Heart left ventricle (tissue), 16 donors: ENCODE measurements at regions of chr16 and their contacts with region 1.

Region 1: GRCh38 chr16:66717112-66717675 is 20.7 kb upstream of the CMTM4 start:
- DNase-seq: peak in 2 of 5 donors; percentile 27 to 35
- ATAC-seq: peak; percentile 38 to 82 (median 67)
- H3K4me3 ChIP-seq: no peak overlapping the region
- H3K27ac ChIP-seq: no peak overlapping the region
- H3K4me1 ChIP-seq: peaks cover 0 to 6% (median 0%) of the 10 kb centered on the region in 12 donors
- H3K27me3 ChIP-seq: no peaks in the 10 kb centered on the region
- CTCF ChIP-seq: peak; percentile 31 to 67 (median 38)
- POLR2A ChIP-seq: no peak

Region 2: DNA sequence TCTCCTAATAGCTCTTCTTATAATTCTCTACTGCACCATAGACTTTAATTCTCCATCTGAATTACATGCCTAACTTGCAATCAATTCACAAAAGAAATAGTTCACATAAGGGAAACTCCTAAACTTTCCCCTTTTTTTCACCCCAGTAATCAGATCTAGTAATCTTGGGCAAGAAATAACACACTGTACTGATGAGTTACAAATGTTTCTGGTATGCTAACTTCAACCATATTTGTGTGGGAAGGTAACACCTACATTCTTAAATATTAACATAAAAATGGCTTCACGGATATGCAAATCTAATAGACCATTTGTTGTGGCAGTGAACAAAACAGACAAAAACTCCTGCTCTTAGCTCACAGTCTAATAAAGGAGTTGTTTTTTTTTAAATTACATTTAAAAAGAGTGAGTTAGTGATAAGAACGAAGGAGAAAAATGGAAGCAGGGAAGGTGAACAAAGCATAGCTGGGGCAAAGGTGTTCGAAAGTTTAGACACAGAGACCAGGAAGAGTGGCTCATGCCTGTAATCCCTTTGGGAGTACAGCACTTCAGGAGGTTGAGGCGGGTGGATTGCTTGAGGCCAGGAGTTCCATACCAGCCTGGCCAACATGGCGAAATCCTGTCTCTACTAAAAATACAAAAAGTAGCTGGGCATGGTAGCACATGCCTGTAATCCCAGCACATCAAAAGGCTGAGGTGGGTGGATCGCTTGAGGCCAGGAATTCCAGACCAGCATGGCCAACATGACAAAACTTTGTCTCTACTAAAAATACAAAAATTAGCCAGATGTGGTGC is 77.9 kb before region 1 on chr16:
- intact Hi-C with region 1: no loop called
- DNase-seq: peak in 1 of 5 donors; percentile 4
- ATAC-seq: no peak
- H3K4me3 ChIP-seq: no peak overlapping the region
- H3K27ac ChIP-seq: no peak overlapping the region
- H3K4me1 ChIP-seq: no peaks in the 10 kb centered on the region
- H3K27me3 ChIP-seq: no peaks in the 10 kb centered on the region
- CTCF ChIP-seq: no peak
- POLR2A ChIP-seq: no peak

Region 3: GRCh38 chr16:66650707-66651473 is 66.3 kb before region 1 on chr16:
- intact Hi-C with region 1: loop called in 1 of 10 experiments (anchors 10 kb)
- DNase-seq: peak; percentile 71 to 82 (median 76)
- ATAC-seq: peak; percentile 71 to 96 (median 91)
- H3K4me3 ChIP-seq: peak overlapping the region in 6 of 12 donors; percentile 3 to 41 (median 33)
- H3K27ac ChIP-seq: no peak overlapping the region
- H3K4me1 ChIP-seq: peaks cover 0 to 36% (median 7%) of the 10 kb centered on the region in 12 donors
- H3K27me3 ChIP-seq: no peaks in the 10 kb centered on the region
- CTCF ChIP-seq: peak; percentile 82 to 97 (median 93)
- POLR2A ChIP-seq: no peak

Region 4: DNA sequence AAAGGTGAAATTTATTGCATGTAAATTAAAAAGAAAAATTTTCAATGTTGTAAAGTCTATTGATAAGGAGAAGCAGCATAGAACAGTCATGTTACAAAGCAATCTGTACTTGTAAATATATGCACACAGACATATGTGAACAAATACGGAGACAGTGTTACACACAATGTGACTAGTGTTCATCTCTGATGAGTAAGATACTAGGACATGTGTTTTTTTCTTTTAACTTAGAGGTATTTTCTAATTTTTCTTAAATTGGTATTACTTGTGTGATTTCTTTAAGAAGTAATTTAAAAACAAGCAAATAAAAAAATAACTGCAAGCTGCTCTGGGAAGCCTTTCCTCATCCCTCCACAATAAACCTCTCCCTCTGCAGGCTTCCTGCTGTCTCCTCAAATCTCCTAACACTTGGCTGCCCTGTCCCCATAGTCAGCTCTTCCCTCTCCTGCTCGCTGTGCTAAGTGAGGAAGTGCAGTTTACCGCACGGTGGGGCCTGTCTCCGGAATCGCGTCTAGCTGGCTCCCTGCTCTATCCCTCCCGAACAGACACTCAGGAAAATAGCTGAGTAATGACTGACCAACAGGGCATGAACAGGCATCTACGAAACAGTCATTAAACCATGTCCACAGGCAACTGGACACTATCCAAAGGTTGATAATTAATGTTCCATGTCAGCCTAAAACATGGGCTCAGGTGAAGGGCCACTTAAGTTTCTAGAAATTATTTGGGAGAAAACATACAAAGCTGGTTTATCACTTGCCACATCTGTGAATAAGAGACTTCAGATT is 56.6 kb before region 1 on chr16:
- intact Hi-C with region 1: loop called in 2 of 10 experiments (anchors 10 kb)
- DNase-seq: peak; percentile 71 to 82 (median 75)
- ATAC-seq: peak; percentile 93 to 97 (median 97)
- H3K4me3 ChIP-seq: no peak overlapping the region
- H3K27ac ChIP-seq: peak overlapping the region; percentile 0 to 78 (median 62)
- H3K4me1 ChIP-seq: peaks cover 3 to 32% (median 25%) of the 10 kb centered on the region in 12 donors
- H3K27me3 ChIP-seq: no peaks in the 10 kb centered on the region
- CTCF ChIP-seq: peak in 7 of 12 donors; percentile 5 to 52 (median 33)
- POLR2A ChIP-seq: no peak

Region 5: GRCh38 chr16:66728804-66729203 is 11.6 kb after region 1 on chr16:
- intact Hi-C with region 1: no loop called
- DNase-seq: no peak
- ATAC-seq: no peak
- H3K4me3 ChIP-seq: no peak overlapping the region
- H3K27ac ChIP-seq: no peak overlapping the region
- H3K4me1 ChIP-seq: peaks cover 0 to 15% (median 4%) of the 10 kb centered on the region in 12 donors
- H3K27me3 ChIP-seq: no peaks in the 10 kb centered on the region
- CTCF ChIP-seq: no peak
- POLR2A ChIP-seq: no peak

Region 6: GRCh38 chr16:66810391-66810790 is 93.2 kb after region 1 on chr16:
- intact Hi-C with region 1: loop called in 3 of 10 experiments (anchors 5 to 10 kb)
- DNase-seq: no peak
- ATAC-seq: peak in 2 of 4 donors; percentile 28 to 65
- H3K4me3 ChIP-seq: no peak overlapping the region
- H3K27ac ChIP-seq: no peak overlapping the region
- H3K4me1 ChIP-seq: no peaks in the 10 kb centered on the region
- H3K27me3 ChIP-seq: no peaks in the 10 kb centered on the region
- CTCF ChIP-seq: no peak
- POLR2A ChIP-seq: no peak